ENCODE measurements at regions of chr7 and their contacts with region 1.

Region 1: GRCh38 chr7:85041605-85042216 is 145.1 kb downstream of the SEMA3D start:
- DNase-seq: peak; percentile 87
- ATAC-seq: peak; percentile 98
- H3K4me3 ChIP-seq: no peak overlapping the region
- H3K27ac ChIP-seq: no peak overlapping the region
- H3K4me1 ChIP-seq: no peaks in the 10 kb centered on the region
- H3K27me3 ChIP-seq: no peaks in the 10 kb centered on the region
- CTCF ChIP-seq: peak; percentile 89

Region 2: DNA sequence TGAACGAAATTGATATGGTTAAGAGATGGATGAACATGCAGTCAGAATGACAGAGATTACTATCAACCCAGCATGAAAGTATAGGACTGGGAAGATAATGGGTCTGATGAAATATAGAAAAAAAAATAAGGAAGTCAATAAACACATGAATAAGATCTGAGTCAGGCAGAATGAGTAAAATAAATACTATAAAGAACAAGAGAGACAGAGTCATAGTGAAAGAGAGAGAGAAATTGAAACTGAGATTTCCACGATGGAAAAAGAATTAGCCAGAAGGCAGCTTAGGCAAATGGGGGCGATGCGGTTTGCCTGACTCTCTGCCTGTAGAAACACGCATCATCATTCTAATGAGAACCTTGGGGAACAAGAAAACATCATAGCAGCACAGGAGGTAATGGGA is 118.5 kb after region 1 on chr7:
- CTCF ChIA-PET with region 1: no interaction called
- POLR2A ChIA-PET with region 1: no interaction called
- intact Hi-C with region 1: loop called (anchors 2 kb)
- DNase-seq: peak; percentile 82
- ATAC-seq: peak; percentile 87
- H3K4me3 ChIP-seq: peak overlapping the region; percentile 64
- H3K27ac ChIP-seq: peak overlapping the region; percentile 91
- H3K4me1 ChIP-seq: peaks cover 34% of the 10 kb centered on the region
- H3K27me3 ChIP-seq: no peaks in the 10 kb centered on the region
- CTCF ChIP-seq: no peak

Region 3: DNA sequence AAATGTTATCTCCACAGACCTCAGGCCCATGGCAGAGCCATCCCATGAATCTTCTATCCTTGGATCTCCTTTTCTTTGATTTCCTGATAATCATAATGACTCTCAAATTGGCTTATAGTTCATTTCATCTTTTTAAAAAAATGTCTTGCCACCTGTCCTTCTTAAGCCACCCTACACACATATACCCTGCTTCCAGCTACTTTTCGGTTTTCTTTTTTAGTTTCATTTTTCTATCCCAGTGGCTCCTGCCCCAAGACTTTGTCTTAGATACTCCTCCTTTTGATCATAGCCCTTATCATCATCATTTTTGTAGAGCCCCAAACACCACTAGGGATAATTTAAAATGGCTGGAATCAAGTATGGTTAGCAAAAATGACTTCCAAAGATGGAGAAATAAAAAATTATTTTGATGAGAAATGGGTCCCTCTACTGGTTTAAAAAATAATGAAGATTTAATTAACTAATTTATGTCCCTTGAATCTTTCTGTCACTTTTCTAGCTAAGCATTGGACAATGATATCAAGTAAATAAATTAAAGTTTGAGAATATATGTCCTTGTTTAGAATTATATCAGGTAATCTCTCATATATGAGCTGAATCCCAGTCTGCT is 422.4 kb after region 1 on chr7:
- CTCF ChIA-PET with region 1: interaction called, 4 read pairs
- POLR2A ChIA-PET with region 1: no interaction called
- intact Hi-C with region 1: loop called (anchors 1 kb)
- DNase-seq: peak; percentile 36
- ATAC-seq: peak; percentile 22; the same call in 1 of the 2 replicates
- H3K4me3 ChIP-seq: no peak overlapping the region
- H3K27ac ChIP-seq: no peak overlapping the region
- H3K4me1 ChIP-seq: no peaks in the 10 kb centered on the region
- H3K27me3 ChIP-seq: no peaks in the 10 kb centered on the region
- CTCF ChIP-seq: peak; percentile 52

Region 4: DNA sequence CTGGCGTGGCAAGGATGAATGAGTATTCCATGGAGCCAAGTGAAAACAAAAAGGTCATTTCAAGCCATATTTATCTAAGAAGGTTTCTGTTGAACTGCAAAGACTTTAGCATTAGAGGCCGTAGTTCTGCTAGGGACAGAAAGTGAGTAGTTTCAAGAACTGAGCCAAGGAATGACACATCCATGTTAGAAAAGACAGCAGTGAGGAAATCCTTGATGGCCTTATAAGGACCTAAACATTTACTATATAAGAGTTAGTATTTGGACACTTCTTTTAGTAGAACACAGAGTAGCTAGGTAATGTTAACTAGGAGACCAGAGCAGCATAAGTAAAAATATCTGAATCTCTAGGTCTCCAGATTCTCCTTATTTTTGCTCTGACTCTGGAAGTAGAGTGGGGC is 475.0 kb after region 1 on chr7:
- CTCF ChIA-PET with region 1: no interaction called
- POLR2A ChIA-PET with region 1: no interaction called
- intact Hi-C with region 1: no loop called
- DNase-seq: no peak
- ATAC-seq: no peak
- H3K4me3 ChIP-seq: no peak overlapping the region
- H3K27ac ChIP-seq: no peak overlapping the region
- H3K4me1 ChIP-seq: no peaks in the 10 kb centered on the region
- H3K27me3 ChIP-seq: no peaks in the 10 kb centered on the region
- CTCF ChIP-seq: no peak

Region 5: DNA sequence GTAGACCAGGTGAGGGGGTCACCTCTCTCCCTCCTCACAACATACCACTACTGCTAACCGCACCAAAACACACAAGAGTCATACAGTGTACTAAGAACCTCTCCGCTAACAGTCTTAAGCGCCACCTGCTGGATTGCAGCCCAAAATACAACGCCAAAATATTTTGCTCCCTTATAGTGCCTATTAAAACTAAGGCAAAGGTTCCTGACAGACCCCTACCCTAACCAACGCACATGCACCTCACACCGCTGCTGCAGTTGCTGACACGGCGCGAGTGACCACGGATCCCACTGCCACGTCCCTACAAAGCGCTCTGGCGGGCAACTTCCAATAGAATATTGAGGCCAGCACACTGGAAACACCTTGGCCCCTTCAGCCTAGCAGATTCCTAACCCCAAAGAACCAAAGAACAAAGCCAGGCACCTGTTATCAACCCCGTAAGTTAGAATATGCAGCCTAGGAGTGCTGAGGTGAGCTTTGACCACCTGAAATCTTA is 708.8 kb after region 1 on chr7:
- CTCF ChIA-PET with region 1: no interaction called
- POLR2A ChIA-PET with region 1: no interaction called
- intact Hi-C with region 1: loop called (anchors 2 kb)
- DNase-seq: peak; percentile 84
- ATAC-seq: peak; percentile 86
- H3K4me3 ChIP-seq: no peak overlapping the region
- H3K27ac ChIP-seq: no peak overlapping the region
- H3K4me1 ChIP-seq: peaks cover 19% of the 10 kb centered on the region
- H3K27me3 ChIP-seq: no peaks in the 10 kb centered on the region
- CTCF ChIP-seq: peak; percentile 82

Region 6: DNA sequence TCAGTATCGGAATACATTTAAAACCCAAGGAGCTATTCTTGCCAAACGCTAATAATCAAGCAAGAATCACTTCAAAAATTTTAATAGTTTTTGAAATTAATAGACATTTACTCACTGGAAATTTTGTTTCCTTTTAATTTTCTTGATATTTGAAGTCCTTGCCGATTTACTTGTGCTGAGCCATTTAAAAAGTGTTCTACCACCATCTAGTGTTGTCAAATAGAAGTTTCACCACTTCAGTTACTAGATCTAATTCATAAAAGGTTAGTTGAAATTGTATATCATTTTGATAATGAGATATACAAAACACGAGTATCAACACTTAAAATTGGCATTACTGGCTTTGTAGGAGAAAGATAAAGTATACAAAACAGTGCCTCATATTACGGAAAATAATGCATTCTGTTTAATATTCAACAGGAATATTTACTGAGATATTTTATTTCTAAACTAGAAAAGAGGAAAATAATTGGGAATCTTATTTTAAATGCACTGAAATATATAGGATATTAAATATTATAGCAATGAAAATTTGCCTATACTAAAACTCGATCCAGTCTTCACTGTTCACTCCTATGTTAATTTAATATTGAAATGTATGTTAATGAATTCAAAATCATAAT is 810.0 kb after region 1 on chr7:
- CTCF ChIA-PET with region 1: no interaction called
- POLR2A ChIA-PET with region 1: no interaction called
- intact Hi-C with region 1: loop called (anchors 1 kb)
- DNase-seq: peak; percentile 51
- ATAC-seq: peak; percentile 50; the same call in 1 of the 2 replicates
- H3K4me3 ChIP-seq: no peak overlapping the region
- H3K27ac ChIP-seq: no peak overlapping the region
- H3K4me1 ChIP-seq: no peaks in the 10 kb centered on the region
- H3K27me3 ChIP-seq: 0 out of 2 replicates have a peak, but pooled peaks cover 2% of the 10 kb centered on the region
- CTCF ChIP-seq: peak; percentile 66